Heart right ventricle (tissue), 16 donors: ENCODE measurements at regions of chr13 and their contacts with region 1.

Region 1: GRCh38 chr13:27826379-27827353 is 34.4 kb downstream of the GSX1 start:
- DNase-seq: peak; percentile 74 to 76
- ATAC-seq: peak; percentile 87 to 95 (median 91)
- H3K4me3 ChIP-seq: peak overlapping the region in 7 of 10 donors; percentile 4 to 37 (median 23)
- H3K27ac ChIP-seq: no peak overlapping the region
- H3K4me1 ChIP-seq: peaks cover 0 to 18% (median 8%) of the 10 kb centered on the region in 9 donors
- H3K27me3 ChIP-seq: peaks cover 0 to 100% (median 89%) of the 10 kb centered on the region in 7 donors
- CTCF ChIP-seq: peak; percentile 82 to 97 (median 92)

Region 2: GRCh38 chr13:27953676-27954405 is 127.2 kb after region 1 on chr13:
- intact Hi-C with region 1: loop called in 4 of 10 experiments (anchors 10 kb)
- DNase-seq: peak; percentile 47 to 74
- ATAC-seq: peak; percentile 88 to 97 (median 92)
- H3K4me3 ChIP-seq: peak overlapping the region; percentile 20 to 56 (median 44)
- H3K27ac ChIP-seq: no peak overlapping the region
- H3K4me1 ChIP-seq: peaks cover 2 to 15% (median 13%) of the 10 kb centered on the region in 9 donors
- H3K27me3 ChIP-seq: peaks cover 18 to 99% (median 96%) of the 10 kb centered on the region in 7 donors
- CTCF ChIP-seq: peak; percentile 56 to 91 (median 82)

Region 3: GRCh38 chr13:27980280-27980998 is 153.8 kb after region 1 on chr13:
- intact Hi-C with region 1: loop called (anchors 1 to 10 kb)
- DNase-seq: no peak
- ATAC-seq: no peak
- H3K4me3 ChIP-seq: no peak overlapping the region
- H3K27ac ChIP-seq: no peak overlapping the region
- H3K4me1 ChIP-seq: peaks cover 0 to 37% (median 26%) of the 10 kb centered on the region in 9 donors
- H3K27me3 ChIP-seq: peaks cover 64 to 99% (median 97%) of the 10 kb centered on the region in 7 donors
- CTCF ChIP-seq: no peak

Region 4: GRCh38 chr13:27985600-27985999 is 158.9 kb after region 1 on chr13:
- intact Hi-C with region 1: loop called (anchors 1 to 10 kb)
- DNase-seq: no peak
- ATAC-seq: no peak
- H3K4me3 ChIP-seq: no peak overlapping the region
- H3K27ac ChIP-seq: no peak overlapping the region
- H3K4me1 ChIP-seq: peaks cover 0 to 2% (median under 1%) of the 10 kb centered on the region in 9 donors
- H3K27me3 ChIP-seq: peaks cover 18 to 93% (median 79%) of the 10 kb centered on the region in 7 donors
- CTCF ChIP-seq: no peak